HCT116 (cell line): ENCODE measurements at regions of chr9 and their contacts with region 1.

Region 1: DNA sequence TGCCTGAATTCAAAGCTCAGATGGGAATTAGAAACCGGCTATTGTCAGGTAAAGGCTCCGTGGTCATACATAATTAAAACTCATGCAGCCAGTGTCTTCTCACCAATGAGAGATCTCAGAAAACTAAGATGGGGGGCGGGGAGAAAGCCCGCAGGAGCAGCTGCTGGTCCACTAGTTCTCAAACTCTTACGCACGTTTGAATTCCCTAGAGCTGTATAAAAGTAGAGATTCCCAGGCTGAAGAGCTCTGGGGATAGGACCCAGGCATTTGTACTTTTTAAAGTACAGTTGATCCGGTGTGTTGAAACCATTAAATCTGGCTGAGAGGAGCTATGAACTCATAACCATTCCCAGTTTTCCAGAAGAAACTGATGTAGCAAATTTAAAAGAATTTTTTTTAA is 68.5 kb downstream of the FRMD3 start:
- DNase-seq: no peak
- ATAC-seq: no peak
- H3K4me3 ChIP-seq: no peak overlapping the region
- H3K27ac ChIP-seq: no peak overlapping the region
- H3K4me1 ChIP-seq: peaks cover 0 to 8% of the 10 kb centered on the region in 2 experiments; a peak in 1 of 4 replicates
- H3K27me3 ChIP-seq: no peaks in the 10 kb centered on the region; the same call in 1 of the 2 replicates
- CTCF ChIP-seq: no peak
- POLR2A ChIP-seq: no peak
- RAD21 ChIP-seq: no peak

Region 2: DNA sequence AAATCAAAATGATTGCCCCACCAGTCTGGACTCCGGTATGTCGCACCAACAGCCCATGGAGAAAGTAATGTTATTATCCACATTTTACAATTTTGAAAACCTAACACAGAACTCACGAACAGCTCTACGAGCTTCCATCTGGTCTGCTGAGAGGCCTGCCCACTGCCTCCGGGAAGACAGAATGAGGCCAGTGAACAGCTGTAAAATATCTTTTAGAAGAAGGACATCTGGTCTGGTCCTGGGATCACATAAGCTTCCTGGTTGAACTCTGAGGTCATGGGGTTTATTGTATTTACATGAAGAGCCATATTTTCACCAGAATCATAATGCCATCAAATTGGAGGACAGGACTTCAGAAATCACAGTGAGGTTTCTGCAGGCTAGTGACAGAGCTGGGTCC is 20.6 kb before region 1 on chr9:
- CTCF ChIA-PET with region 1: no interaction called
- POLR2A ChIA-PET with region 1: no interaction called
- RAD21 ChIA-PET with region 1: interaction called in 1 of 2 experiments, 4 read pairs
- intact Hi-C with region 1: loop called (anchors 2 kb)
- DNase-seq: no peak
- ATAC-seq: no peak
- H3K4me3 ChIP-seq: no peak overlapping the region
- H3K27ac ChIP-seq: no peak overlapping the region
- H3K4me1 ChIP-seq: no peaks in the 10 kb centered on the region
- H3K27me3 ChIP-seq: no peaks in the 10 kb centered on the region
- CTCF ChIP-seq: no peak
- POLR2A ChIP-seq: no peak
- RAD21 ChIP-seq: no peak